Activated CD8-positive, alpha-beta T cell treated with anti-CD3 and anti-CD28 coated beads for 36 hours (primary cell): ENCODE measurements at regions of chr18 and their contacts with region 1.

Region 1: DNA sequence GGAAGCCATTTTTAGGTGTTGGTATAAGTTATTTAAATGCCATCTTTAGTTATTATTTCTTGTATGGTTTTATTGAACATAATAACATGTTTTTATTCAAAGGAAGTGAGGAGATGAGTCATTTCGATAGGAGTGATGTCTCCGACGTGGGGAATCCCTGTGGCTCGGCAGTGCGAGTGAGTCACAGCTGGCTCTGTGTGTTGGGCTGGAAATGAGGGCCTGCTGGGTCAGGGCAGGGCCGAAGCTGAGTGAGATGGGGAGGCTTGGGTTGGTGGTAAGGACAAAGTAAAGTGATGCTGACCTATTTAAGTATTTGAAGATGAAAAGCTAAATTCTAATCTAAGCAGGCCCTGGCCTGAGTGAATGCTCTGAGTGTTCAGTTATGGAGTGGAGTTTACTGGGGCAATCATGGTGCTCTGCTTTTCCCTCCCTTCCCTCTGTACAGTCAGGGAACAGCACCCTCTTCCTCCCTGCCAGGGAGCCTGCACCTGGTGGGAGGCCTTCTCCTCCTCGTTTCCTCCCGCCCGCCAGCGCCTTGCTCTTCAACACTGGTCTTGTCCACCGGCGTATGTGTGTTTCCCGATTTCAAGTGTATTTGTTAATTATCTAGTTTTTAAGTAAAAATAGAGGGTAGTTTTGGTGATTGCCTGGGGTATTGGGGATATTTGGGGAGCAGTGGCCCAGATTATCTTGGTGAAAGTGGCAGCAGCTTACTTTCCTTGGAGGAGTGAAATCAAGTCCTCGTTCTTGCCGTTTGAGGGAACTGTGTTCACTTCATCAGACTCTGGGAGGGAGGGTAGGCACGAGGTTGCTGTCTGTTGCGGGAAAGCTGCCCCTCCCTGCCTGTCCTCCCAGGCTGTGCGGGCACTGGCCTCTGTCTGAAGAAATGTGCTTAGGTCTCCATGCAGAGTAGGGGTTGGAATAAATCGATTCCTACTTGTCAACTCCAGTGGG is 157.0 kb downstream of the LDLRAD4 start:
- DNase-seq: peak; percentile 91
- ATAC-seq: peak; percentile 75
- H3K4me3 Mint-ChIP-seq: peak overlapping the region; percentile 56
- H3K27ac Mint-ChIP-seq: peak overlapping the region; percentile 96
- H3K4me1 Mint-ChIP-seq: peaks cover 88% of the 10 kb centered on the region
- H3K27me3 Mint-ChIP-seq: no peaks in the 10 kb centered on the region
- CTCF ChIP-seq: no peak

Region 2: GRCh38 chr18:13221869-13222855 is 153.4 kb before region 1 on chr18:
- CTCF ChIA-PET with region 1: no interaction called
- POLR2A ChIA-PET with region 1: interaction called, 10 read pairs
- intact Hi-C with region 1: loop called (anchors 2 kb)
- DNase-seq: no peak
- ATAC-seq: no peak
- H3K4me3 Mint-ChIP-seq: no peak overlapping the region
- H3K27ac Mint-ChIP-seq: no peak overlapping the region
- H3K4me1 Mint-ChIP-seq: peaks cover 34% of the 10 kb centered on the region
- H3K27me3 Mint-ChIP-seq: peaks cover 6% of the 10 kb centered on the region
- CTCF ChIP-seq: no peak

Region 3: GRCh38 chr18:13435596-13436327 is 60.2 kb after region 1 on chr18:
- CTCF ChIA-PET with region 1: no interaction called
- POLR2A ChIA-PET with region 1: interaction called, 4 read pairs
- intact Hi-C with region 1: loop called (anchors 5 kb)
- DNase-seq: peak; percentile 37
- ATAC-seq: peak; percentile 21
- H3K4me3 Mint-ChIP-seq: no peak overlapping the region
- H3K27ac Mint-ChIP-seq: peak overlapping the region; percentile 87
- H3K4me1 Mint-ChIP-seq: peaks cover 57% of the 10 kb centered on the region
- H3K27me3 Mint-ChIP-seq: no peaks in the 10 kb centered on the region
- CTCF ChIP-seq: no peak